ENCODE measurements at regions of chr13 and their contacts with region 1.

Region 1: DNA sequence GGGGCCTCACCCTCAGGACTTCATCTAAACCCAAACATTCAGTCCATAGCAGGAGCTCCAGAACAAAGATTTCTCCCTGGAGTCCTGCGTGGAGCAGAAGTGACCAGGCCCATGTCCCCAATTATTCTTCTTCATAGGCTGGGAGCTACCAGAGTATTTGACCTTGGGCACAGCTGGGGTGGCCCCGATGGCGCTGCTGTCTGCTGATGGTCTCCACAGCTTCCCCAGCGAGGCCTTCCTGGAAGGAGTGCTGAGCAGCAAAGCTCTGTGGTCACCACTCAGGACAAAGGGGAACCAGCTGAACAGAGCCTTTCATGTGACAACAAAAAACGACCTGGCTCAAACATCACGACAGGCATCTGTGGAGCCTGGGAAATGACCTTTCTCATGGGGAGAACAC is 62.7 kb upstream of the ARGLU1 start:
- DNase-seq: no peak
- H3K4me3 ChIP-seq: no peak overlapping the region
- H3K4me3 Mint-ChIP-seq: no peak overlapping the region
- H3K27ac ChIP-seq: no peak overlapping the region
- H3K27ac Mint-ChIP-seq: no peak overlapping the region
- H3K4me1 ChIP-seq: no peaks in the 10 kb centered on the region
- H3K4me1 Mint-ChIP-seq: no peaks in the 10 kb centered on the region
- H3K27me3 ChIP-seq: no peaks in the 10 kb centered on the region
- H3K27me3 Mint-ChIP-seq: peaks cover 19 to 26% of the 10 kb centered on the region in 2 donors

Region 2: GRCh38 chr13:106619688-106620555 is 10.7 kb before region 1 on chr13:
- CTCF ChIA-PET with region 1: interaction called, 11 read pairs
- POLR2A ChIA-PET with region 1: no interaction called
- DNase-seq: peak in 2 of 5 donors; percentile 28 to 43
- H3K4me3 ChIP-seq: no peak overlapping the region
- H3K4me3 Mint-ChIP-seq: peak overlapping the region in 1 of 7 donors; percentile 18
- H3K27ac ChIP-seq: no peak overlapping the region
- H3K27ac Mint-ChIP-seq: peak overlapping the region in 1 of 8 donors; percentile 56
- H3K4me1 ChIP-seq: no peaks in the 10 kb centered on the region
- H3K4me1 Mint-ChIP-seq: peaks cover 2 to 8% (median 5%) of the 10 kb centered on the region in 3 donors
- H3K27me3 ChIP-seq: no peaks in the 10 kb centered on the region
- H3K27me3 Mint-ChIP-seq: peaks cover 2 to 44% of the 10 kb centered on the region in 2 donors

Region 3: DNA sequence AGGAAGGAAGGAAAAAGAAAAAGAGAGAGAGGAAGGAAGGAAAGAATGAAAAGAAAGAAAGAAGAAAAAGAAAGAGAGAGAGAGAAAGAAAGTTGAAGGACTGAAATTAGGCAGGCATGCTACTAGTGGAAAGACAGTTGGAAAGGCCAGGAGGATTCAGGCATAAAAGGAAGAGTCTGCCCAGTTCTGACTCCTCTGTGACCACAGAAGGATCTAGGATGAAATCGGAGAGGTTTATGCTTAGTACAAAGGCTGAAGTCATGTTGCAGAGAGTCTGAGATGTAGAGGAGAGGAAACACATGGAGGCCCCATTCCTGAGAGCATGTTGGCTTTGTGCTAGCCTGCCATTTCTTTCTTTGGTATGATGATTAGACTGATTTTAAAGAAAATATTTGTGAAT is 183.8 kb after region 1 on chr13:
- CTCF ChIA-PET with region 1: no interaction called
- POLR2A ChIA-PET with region 1: no interaction called
- DNase-seq: no peak
- H3K4me3 ChIP-seq: no peak overlapping the region
- H3K4me3 Mint-ChIP-seq: no peak overlapping the region
- H3K27ac ChIP-seq: no peak overlapping the region
- H3K27ac Mint-ChIP-seq: no peak overlapping the region
- H3K4me1 ChIP-seq: no peaks in the 10 kb centered on the region
- H3K4me1 Mint-ChIP-seq: no peaks in the 10 kb centered on the region
- H3K27me3 ChIP-seq: no peaks in the 10 kb centered on the region
- H3K27me3 Mint-ChIP-seq: peaks cover 0 to 1% of the 10 kb centered on the region in 2 donors